PC-3 (cell line): ENCODE measurements at regions of chr15 and their contacts with region 1.

Region 1: GRCh38 chr15:46091860-46092450 is 457.1 kb downstream of the SQOR start:
- DNase-seq: peak; percentile 67
- ATAC-seq: peak; percentile 24; the same call in 1 of the 2 replicates
- H3K4me3 ChIP-seq: no peak overlapping the region
- H3K27ac ChIP-seq: no peak overlapping the region
- H3K4me1 ChIP-seq: peaks cover 24% of the 10 kb centered on the region
- H3K27me3 ChIP-seq: no peaks in the 10 kb centered on the region
- CTCF ChIP-seq: peak; percentile 81

Region 2: GRCh38 chr15:45795440-45796069 is 296.4 kb before region 1 on chr15:
- CTCF ChIA-PET with region 1: interaction called, 3 read pairs
- POLR2A ChIA-PET with region 1: interaction called, 3 read pairs
- intact Hi-C with region 1: loop called (anchors 1 kb)
- DNase-seq: peak; percentile 74
- ATAC-seq: peak; percentile 80
- H3K4me3 ChIP-seq: no peak overlapping the region
- H3K27ac ChIP-seq: no peak overlapping the region
- H3K4me1 ChIP-seq: no peaks in the 10 kb centered on the region; the same call in 1 of the 2 replicates
- H3K27me3 ChIP-seq: no peaks in the 10 kb centered on the region
- CTCF ChIP-seq: peak; percentile 78

Region 3: GRCh38 chr15:45855907-45856579 is 235.9 kb before region 1 on chr15:
- CTCF ChIA-PET with region 1: no interaction called
- POLR2A ChIA-PET with region 1: no interaction called
- intact Hi-C with region 1: loop called (anchors 2 kb)
- DNase-seq: peak; percentile 85
- ATAC-seq: peak; percentile 77
- H3K4me3 ChIP-seq: peak overlapping the region; percentile 39
- H3K27ac ChIP-seq: peak overlapping the region; percentile 86
- H3K4me1 ChIP-seq: peaks cover 43% of the 10 kb centered on the region
- H3K27me3 ChIP-seq: no peaks in the 10 kb centered on the region
- CTCF ChIP-seq: no peak

Region 4: GRCh38 chr15:46127361-46127874 is 35.5 kb after region 1 on chr15:
- CTCF ChIA-PET with region 1: no interaction called
- POLR2A ChIA-PET with region 1: no interaction called
- intact Hi-C with region 1: loop called (anchors 5 kb)
- DNase-seq: peak; percentile 90
- ATAC-seq: peak; percentile 88
- H3K4me3 ChIP-seq: peak overlapping the region; percentile 51
- H3K27ac ChIP-seq: peak overlapping the region; percentile 100
- H3K4me1 ChIP-seq: peaks cover 30% of the 10 kb centered on the region
- H3K27me3 ChIP-seq: no peaks in the 10 kb centered on the region
- CTCF ChIP-seq: no peak

Region 5: DNA sequence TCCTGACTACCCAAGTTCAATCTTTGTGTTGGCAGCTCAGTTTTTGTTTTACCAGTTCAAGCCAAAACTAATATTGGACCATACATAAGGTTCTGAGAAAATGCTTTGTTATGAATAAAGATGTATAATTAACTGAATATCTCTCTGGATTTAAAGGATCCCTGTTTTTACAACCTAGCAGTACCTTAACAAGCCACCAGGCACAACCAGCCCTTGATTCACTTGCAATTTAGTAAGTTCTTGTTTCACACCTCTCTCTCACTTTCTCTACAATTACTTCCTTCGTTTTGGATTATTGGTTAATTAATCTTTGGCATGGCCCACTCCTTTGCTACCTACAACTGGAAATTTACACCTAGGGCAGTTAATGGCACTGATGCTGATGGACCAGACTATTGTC is 74.8 kb after region 1 on chr15:
- CTCF ChIA-PET with region 1: no interaction called
- POLR2A ChIA-PET with region 1: no interaction called
- intact Hi-C with region 1: no loop called
- DNase-seq: no peak
- ATAC-seq: no peak
- H3K4me3 ChIP-seq: no peak overlapping the region
- H3K27ac ChIP-seq: no peak overlapping the region
- H3K4me1 ChIP-seq: peaks cover 7% of the 10 kb centered on the region; the same call in 1 of the 2 replicates
- H3K27me3 ChIP-seq: no peaks in the 10 kb centered on the region
- CTCF ChIP-seq: no peak

Region 6: DNA sequence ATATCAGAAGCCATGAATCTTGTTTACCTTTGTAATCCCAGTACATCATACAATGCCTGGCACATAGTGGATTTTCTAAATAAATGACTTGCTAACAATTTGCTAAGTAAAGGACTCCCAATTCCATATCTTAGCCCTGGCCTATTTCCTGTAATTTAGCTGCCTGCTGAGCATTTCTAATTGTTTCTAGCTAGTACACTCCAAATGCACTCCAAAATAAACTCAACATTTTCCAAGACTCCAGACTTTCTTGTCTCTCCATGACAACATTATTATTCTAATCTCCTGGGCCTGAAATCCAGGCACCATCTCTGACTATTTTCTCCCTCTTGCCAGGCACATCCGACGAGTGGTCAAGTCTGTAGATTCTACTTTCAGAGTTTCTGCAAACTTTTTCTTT is 316.4 kb after region 1 on chr15:
- CTCF ChIA-PET with region 1: no interaction called
- POLR2A ChIA-PET with region 1: no interaction called
- intact Hi-C with region 1: no loop called
- DNase-seq: no peak
- ATAC-seq: no peak
- H3K4me3 ChIP-seq: no peak overlapping the region
- H3K27ac ChIP-seq: no peak overlapping the region
- H3K4me1 ChIP-seq: no peaks in the 10 kb centered on the region
- H3K27me3 ChIP-seq: no peaks in the 10 kb centered on the region
- CTCF ChIP-seq: no peak